GM12878 (cell line): ENCODE measurements at regions of chr13 and their contacts with region 1.

Region 1: DNA sequence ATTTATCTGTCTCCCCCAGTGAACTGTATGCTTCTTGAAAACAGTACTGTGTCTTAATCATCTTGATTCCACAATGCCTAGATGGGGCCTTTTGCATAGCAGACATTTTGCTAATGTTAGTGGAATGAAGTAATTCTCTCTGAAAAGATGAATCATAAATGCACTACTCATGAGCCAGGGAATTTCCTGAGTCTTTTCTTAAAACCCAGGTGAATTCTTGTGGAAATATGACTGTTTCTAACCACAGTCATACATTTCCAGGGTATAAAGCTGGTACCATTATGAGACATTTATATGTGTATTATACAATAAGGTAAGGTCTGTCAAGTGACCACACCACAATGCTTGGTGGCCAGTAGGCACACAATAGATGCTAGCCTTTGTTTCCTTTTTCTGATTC is 5.5 kb upstream of the KCTD4 start:
- DNase-seq: peak; percentile 21
- ATAC-seq: peak; percentile 92
- H3K4me3 ChIP-seq: 0 out of 2 replicates have a peak overlapping the region, but pooled peaks have one; percentile 7
- H3K27ac ChIP-seq: peak overlapping the region; percentile 38; the same call in 1 of the 2 replicates
- H3K4me1 ChIP-seq: peaks cover 3% of the 10 kb centered on the region; the same call in 1 of the 2 replicates
- H3K27me3 ChIP-seq: no peaks in the 10 kb centered on the region
- CTCF ChIP-seq: no peak
- EP300 ChIP-seq: peak in 1 of 2 experiments; percentile 54; a peak in 1 of 4 replicates
- POLR2A ChIP-seq: no peak
- RAD21 ChIP-seq: no peak

Region 2: GRCh38 chr13:45194081-45194939 is 12.0 kb before region 1 on chr13:
- CTCF ChIA-PET with region 1: interaction called, 4 read pairs
- POLR2A ChIA-PET with region 1: interaction called, 5 read pairs
- RAD21 ChIA-PET with region 1: no interaction called
- SMC1A ChIA-PET with region 1: interaction called, 22 read pairs
- in situ Hi-C with region 1: no loop called
- intact Hi-C with region 1: no loop called
- DNase-seq: no peak
- ATAC-seq: no peak
- H3K4me3 ChIP-seq: no peak overlapping the region
- H3K27ac ChIP-seq: no peak overlapping the region
- H3K4me1 ChIP-seq: peaks cover 5% of the 10 kb centered on the region; the same call in 1 of the 2 replicates
- H3K27me3 ChIP-seq: no peaks in the 10 kb centered on the region
- CTCF ChIP-seq: no peak
- EP300 ChIP-seq: no peak
- POLR2A ChIP-seq: no peak
- RAD21 ChIP-seq: no peak

Region 3: GRCh38 chr13:45219938-45220375 is 13.6 kb after region 1 on chr13:
- CTCF ChIA-PET with region 1: interaction called, 7 read pairs
- POLR2A ChIA-PET with region 1: interaction called, 3 read pairs
- RAD21 ChIA-PET with region 1: interaction called, 4 read pairs
- SMC1A ChIA-PET with region 1: interaction called, 16 read pairs
- in situ Hi-C with region 1: no loop called
- intact Hi-C with region 1: no loop called
- DNase-seq: no peak
- ATAC-seq: no peak; the same call in 2 of the 3 replicates
- H3K4me3 ChIP-seq: no peak overlapping the region
- H3K27ac ChIP-seq: no peak overlapping the region
- H3K4me1 ChIP-seq: no peaks in the 10 kb centered on the region
- H3K27me3 ChIP-seq: no peaks in the 10 kb centered on the region
- CTCF ChIP-seq: no peak
- EP300 ChIP-seq: no peak
- POLR2A ChIP-seq: no peak
- RAD21 ChIP-seq: no peak